ENCODE measurements at regions of chr3 and their contacts with region 1.

Region 1: GRCh38 chr3:70716832-70717231 is 404.4 kb upstream of the MDFIC2 start:
- DNase-seq: no peak
- H3K4me3 ChIP-seq: no peak overlapping the region
- H3K27ac ChIP-seq: no peak overlapping the region
- H3K4me1 ChIP-seq: peaks cover 3 to 7% of the 10 kb centered on the region in 2 donors
- H3K27me3 ChIP-seq: no peaks in the 10 kb centered on the region
- CTCF ChIP-seq: peak; percentile 30 to 65 (median 52)

Region 2: GRCh38 chr3:70702132-70702531 is 14.7 kb before region 1 on chr3:
- intact Hi-C with region 1: no loop called
- DNase-seq: no peak
- H3K4me3 ChIP-seq: no peak overlapping the region
- H3K27ac ChIP-seq: no peak overlapping the region
- H3K4me1 ChIP-seq: peaks cover 0 to 17% of the 10 kb centered on the region in 2 donors
- H3K27me3 ChIP-seq: no peaks in the 10 kb centered on the region
- CTCF ChIP-seq: no peak

Region 3: DNA sequence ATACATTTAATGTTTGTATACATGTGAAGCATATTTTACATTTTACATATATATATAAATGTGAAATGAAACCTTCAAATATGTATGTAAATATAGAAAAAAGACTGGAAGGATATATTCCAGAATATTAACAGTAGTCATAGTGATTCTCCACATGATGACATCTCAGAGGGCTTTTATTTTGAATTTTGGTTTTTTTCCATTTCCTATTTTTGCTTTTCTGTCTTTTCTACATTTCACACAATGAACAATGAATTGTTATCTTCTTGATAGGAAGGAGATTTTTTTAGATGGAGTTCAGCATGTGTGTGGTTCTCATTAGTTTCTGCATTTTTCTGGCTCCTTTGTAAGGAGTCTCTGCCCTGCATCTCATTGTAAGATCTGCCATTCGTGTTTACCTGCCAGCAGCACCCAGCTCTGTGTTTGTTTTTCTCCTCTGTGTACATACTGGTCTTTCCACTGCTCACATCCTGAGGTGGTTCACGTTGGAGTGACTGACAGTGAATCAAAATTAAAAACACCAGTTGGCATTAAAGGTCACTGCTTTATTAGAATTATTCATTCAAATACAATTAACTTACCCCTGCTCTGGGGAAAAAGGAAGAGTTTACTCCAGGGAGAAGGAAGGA is 21.0 kb after region 1 on chr3:
- intact Hi-C with region 1: no loop called
- DNase-seq: no peak
- H3K4me3 ChIP-seq: no peak overlapping the region
- H3K27ac ChIP-seq: no peak overlapping the region
- H3K4me1 ChIP-seq: no peaks in the 10 kb centered on the region
- H3K27me3 ChIP-seq: no peaks in the 10 kb centered on the region
- CTCF ChIP-seq: no peak

Region 4: GRCh38 chr3:70889162-70890019 is 172.6 kb after region 1 on chr3:
- intact Hi-C with region 1: loop called (anchors 5 kb)
- DNase-seq: peak in 1 of 2 donors; percentile 78
- H3K4me3 ChIP-seq: no peak overlapping the region
- H3K27ac ChIP-seq: peak overlapping the region; percentile 78
- H3K4me1 ChIP-seq: peaks cover 3 to 17% of the 10 kb centered on the region in 2 donors
- H3K27me3 ChIP-seq: no peaks in the 10 kb centered on the region
- CTCF ChIP-seq: no peak

Region 5: GRCh38 chr3:70959506-70960286 is 242.9 kb after region 1 on chr3:
- intact Hi-C with region 1: loop called (anchors 5 kb)
- DNase-seq: no peak
- H3K4me3 ChIP-seq: no peak overlapping the region
- H3K27ac ChIP-seq: no peak overlapping the region
- H3K4me1 ChIP-seq: peaks cover 7 to 15% of the 10 kb centered on the region in 2 donors
- H3K27me3 ChIP-seq: no peaks in the 10 kb centered on the region
- CTCF ChIP-seq: no peak

Measured in ascending aorta (tissue), 2 donors.